ENCODE measurements at regions of chr14 and their contacts with region 1.

Region 1: GRCh38 chr14:65478596-65478995 is 66.1 kb downstream of the FUT8 start:
- DNase-seq: no peak
- ATAC-seq: peak; percentile 80
- H3K4me3 Mint-ChIP-seq: no peak overlapping the region
- H3K27ac Mint-ChIP-seq: peak overlapping the region; percentile 8
- H3K4me1 Mint-ChIP-seq: peaks cover 72% of the 10 kb centered on the region
- H3K27me3 Mint-ChIP-seq: no peaks in the 10 kb centered on the region

Region 2: GRCh38 chr14:65070455-65070976 is 408.1 kb before region 1 on chr14:
- CTCF ChIA-PET with region 1: no interaction called
- POLR2A ChIA-PET with region 1: no interaction called
- intact Hi-C with region 1: no loop called
- DNase-seq: no peak
- ATAC-seq: no peak
- H3K4me3 Mint-ChIP-seq: no peak overlapping the region
- H3K27ac Mint-ChIP-seq: no peak overlapping the region
- H3K4me1 Mint-ChIP-seq: peaks cover 11% of the 10 kb centered on the region
- H3K27me3 Mint-ChIP-seq: no peaks in the 10 kb centered on the region

Region 3: GRCh38 chr14:65281991-65282895 is 196.4 kb before region 1 on chr14:
- CTCF ChIA-PET with region 1: interaction called, 3 read pairs
- POLR2A ChIA-PET with region 1: no interaction called
- intact Hi-C with region 1: loop called in 1 of 2 experiments (anchors 10 kb)
- DNase-seq: no peak
- ATAC-seq: peak; percentile 10
- H3K4me3 Mint-ChIP-seq: peak overlapping the region; percentile 29
- H3K27ac Mint-ChIP-seq: peak overlapping the region; percentile 75
- H3K4me1 Mint-ChIP-seq: peaks cover 35% of the 10 kb centered on the region
- H3K27me3 Mint-ChIP-seq: no peaks in the 10 kb centered on the region

Region 4: GRCh38 chr14:65438266-65438933 is 40.2 kb before region 1 on chr14:
- CTCF ChIA-PET with region 1: interaction called, 4 read pairs
- POLR2A ChIA-PET with region 1: no interaction called
- intact Hi-C with region 1: loop called in 1 of 2 experiments (anchors 1 kb)
- DNase-seq: no peak
- ATAC-seq: peak; percentile 75
- H3K4me3 Mint-ChIP-seq: no peak overlapping the region
- H3K27ac Mint-ChIP-seq: peak overlapping the region; percentile 74
- H3K4me1 Mint-ChIP-seq: peaks cover 37% of the 10 kb centered on the region
- H3K27me3 Mint-ChIP-seq: no peaks in the 10 kb centered on the region